Activated T-helper 2 cell treated with anti-CD3 and anti-CD28 coated beads, Interferon-gamma antibody, Interleukin-2, Interleukin-4, amounts not matched to agents 10 μg/mL and 5 μg/mL and 100 μg/mL, durations not matched to agents 14 hours and 24 hours and 36 hours (primary cell): ENCODE measurements at regions of chr3 and their contacts with region 1.

Region 1: DNA sequence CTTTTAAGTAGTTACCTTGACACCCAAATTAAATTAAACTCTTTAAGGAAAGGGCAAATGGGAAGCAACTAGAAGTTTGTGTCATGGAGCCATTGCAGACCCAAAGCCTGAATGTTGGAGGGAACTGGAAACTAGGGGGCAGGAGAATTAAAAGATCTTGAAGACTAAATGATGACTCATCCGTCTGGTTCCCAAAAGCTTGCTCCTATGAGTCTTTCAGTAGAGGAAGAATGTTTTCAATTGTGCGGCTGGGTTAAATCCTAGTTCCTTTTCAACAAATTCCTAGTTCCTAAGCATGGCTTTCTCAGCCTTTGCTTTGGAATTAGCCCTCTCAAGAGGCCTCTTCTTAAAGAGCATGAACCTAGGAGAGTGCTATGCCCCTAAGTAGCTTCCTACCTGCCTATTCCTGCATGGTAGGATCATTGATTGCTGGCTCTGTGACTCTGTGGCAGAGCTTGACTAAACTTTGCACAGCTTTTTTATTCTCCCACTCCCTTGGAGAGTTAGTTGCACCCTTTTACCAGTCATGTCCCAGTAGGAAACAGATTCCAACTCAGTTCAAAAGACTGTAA is 17.7 kb downstream of the CLEC3B start:
- DNase-seq: no peak
- H3K4me3 Mint-ChIP-seq: no peak overlapping the region
- H3K27ac Mint-ChIP-seq: no peak overlapping the region
- H3K4me1 Mint-ChIP-seq: peaks cover 33% of the 10 kb centered on the region
- H3K27me3 Mint-ChIP-seq: peaks cover 16% of the 10 kb centered on the region

Region 2: DNA sequence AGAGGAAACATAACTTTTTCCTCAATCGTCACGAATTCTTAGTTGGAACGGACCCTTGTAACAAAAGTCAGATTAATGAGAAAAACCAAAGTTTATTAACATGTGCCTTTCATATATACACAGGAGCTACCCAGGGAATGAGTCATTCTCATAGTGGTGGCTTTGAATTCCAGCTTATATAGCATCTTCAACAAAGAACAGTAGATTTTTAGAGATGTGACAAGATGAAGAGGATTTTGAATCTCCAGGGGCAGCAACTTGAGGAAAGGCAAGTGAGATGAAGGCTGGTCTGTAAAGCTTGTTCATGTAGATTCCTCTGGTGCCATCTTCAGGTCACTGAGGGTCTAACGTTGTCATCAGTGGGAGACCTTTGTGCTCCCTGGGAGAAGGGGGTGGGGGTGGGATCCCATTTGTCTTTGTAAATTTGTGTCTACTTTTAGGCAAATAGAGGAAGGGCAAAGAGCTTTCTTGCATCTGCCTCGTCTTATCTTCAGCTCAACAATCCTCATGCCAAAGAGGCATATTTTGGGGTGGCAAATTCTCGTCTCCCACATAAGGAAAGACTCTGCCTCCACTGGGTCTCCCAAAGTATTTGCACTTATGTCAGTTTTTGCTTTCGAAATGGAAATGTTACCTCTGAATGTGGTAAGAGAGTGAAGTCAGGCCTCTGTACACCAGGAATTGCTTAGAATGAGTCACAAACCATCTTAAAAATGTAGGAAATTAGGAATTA is 11.8 kb after region 1 on chr3:
- intact Hi-C with region 1: loop called (anchors 1 kb)
- DNase-seq: no peak
- H3K4me3 Mint-ChIP-seq: no peak overlapping the region
- H3K27ac Mint-ChIP-seq: no peak overlapping the region
- H3K4me1 Mint-ChIP-seq: peaks cover 46% of the 10 kb centered on the region
- H3K27me3 Mint-ChIP-seq: peaks cover 1% of the 10 kb centered on the region

Region 3: DNA sequence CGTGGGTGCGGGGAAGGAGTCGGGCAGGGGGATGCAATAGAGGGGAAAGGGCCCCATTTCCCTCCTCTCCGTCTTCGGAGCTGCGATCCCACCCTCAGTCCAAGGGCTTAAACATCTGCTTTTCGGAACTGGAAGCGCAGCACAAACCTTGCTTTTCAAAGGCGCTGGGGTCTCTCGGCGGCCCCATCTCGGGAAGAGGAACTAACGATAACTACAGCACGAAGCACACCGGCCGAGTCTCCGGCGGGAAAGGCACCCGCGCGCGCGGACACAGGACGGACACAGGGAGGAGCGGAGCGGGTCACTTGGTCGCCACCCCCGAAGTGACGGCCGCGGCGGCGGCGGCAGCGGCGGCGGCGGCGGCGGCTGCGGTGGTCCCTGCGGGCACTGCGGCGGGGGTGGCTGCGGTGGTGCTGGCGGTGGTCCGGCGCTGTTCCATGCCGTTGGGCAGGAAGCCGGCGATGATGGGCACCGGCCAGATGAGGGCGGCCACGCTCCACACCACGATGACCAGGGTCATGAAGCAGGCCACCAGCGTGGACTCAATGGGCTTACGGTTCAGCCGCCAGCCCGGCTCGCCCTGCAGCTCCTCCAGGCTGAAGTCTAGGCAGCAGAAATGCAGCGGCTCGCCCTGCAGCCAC is 181.1 kb after region 1 on chr3:
- intact Hi-C with region 1: loop called (anchors 5 kb)
- DNase-seq: peak; percentile 13
- H3K4me3 Mint-ChIP-seq: peak overlapping the region; percentile 84
- H3K27ac Mint-ChIP-seq: peak overlapping the region; percentile 62
- H3K4me1 Mint-ChIP-seq: peaks cover 14% of the 10 kb centered on the region
- H3K27me3 Mint-ChIP-seq: peaks cover 77% of the 10 kb centered on the region